ENCODE measurements at regions of chr22 and their contacts with region 1.

Region 1: GRCh38 chr22:24423519-24424000 is 3.8 kb upstream of the ADORA2A start:
- DNase-seq: peak; percentile 30
- H3K4me3 Mint-ChIP-seq: no peak overlapping the region
- H3K27ac Mint-ChIP-seq: no peak overlapping the region
- H3K4me1 Mint-ChIP-seq: peaks cover 6% of the 10 kb centered on the region
- H3K27me3 Mint-ChIP-seq: peaks cover 18% of the 10 kb centered on the region
- CTCF ChIP-seq: peak; percentile 91

Region 2: DNA sequence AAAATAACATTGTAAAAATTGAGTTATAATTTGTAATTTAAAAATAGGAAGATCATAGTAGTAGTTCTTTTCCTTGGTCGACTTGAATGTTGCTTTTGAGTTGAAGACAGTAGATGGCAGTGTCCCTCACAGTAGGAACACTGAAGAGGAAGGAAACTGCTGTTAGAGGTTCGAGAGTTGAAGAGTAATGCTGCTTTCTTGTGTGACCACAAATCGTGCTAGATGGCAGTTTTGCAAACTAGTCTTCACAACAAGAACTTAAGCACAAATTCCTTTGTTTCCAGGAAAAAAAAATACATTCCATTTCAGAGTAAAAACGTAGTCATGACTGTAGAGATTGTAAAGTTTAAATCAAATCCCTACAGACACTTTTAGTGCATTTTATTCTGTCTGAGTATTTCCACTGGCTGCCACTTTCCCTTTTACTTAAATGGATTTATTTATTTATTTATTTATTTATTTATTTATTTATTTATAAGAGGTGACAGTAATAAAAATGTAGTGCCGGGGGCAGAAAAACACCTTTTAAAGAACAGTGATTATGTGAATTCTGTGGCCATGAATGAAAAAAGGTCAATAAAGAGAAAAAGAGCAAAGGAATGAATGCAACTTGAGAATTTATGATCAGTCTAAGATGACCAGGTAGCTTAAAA is 98.3 kb before region 1 on chr22:
- CTCF ChIA-PET with region 1: interaction called, 6 read pairs
- POLR2A ChIA-PET with region 1: no interaction called
- intact Hi-C with region 1: loop called (anchors 5 kb)
- DNase-seq: peak; percentile 61
- H3K4me3 Mint-ChIP-seq: no peak overlapping the region
- H3K27ac Mint-ChIP-seq: no peak overlapping the region
- H3K4me1 Mint-ChIP-seq: peaks cover 11% of the 10 kb centered on the region
- H3K27me3 Mint-ChIP-seq: no peaks in the 10 kb centered on the region
- CTCF ChIP-seq: peak; percentile 49

Region 3: GRCh38 chr22:24433813-24434470 is 10.4 kb after region 1 on chr22:
- CTCF ChIA-PET with region 1: interaction called, 10 read pairs
- POLR2A ChIA-PET with region 1: interaction called, 4 read pairs
- intact Hi-C with region 1: no loop called
- DNase-seq: peak; percentile 30
- H3K4me3 Mint-ChIP-seq: no peak overlapping the region
- H3K27ac Mint-ChIP-seq: no peak overlapping the region
- H3K4me1 Mint-ChIP-seq: peaks cover 15% of the 10 kb centered on the region
- H3K27me3 Mint-ChIP-seq: no peaks in the 10 kb centered on the region
- CTCF ChIP-seq: no peak

Region 4: DNA sequence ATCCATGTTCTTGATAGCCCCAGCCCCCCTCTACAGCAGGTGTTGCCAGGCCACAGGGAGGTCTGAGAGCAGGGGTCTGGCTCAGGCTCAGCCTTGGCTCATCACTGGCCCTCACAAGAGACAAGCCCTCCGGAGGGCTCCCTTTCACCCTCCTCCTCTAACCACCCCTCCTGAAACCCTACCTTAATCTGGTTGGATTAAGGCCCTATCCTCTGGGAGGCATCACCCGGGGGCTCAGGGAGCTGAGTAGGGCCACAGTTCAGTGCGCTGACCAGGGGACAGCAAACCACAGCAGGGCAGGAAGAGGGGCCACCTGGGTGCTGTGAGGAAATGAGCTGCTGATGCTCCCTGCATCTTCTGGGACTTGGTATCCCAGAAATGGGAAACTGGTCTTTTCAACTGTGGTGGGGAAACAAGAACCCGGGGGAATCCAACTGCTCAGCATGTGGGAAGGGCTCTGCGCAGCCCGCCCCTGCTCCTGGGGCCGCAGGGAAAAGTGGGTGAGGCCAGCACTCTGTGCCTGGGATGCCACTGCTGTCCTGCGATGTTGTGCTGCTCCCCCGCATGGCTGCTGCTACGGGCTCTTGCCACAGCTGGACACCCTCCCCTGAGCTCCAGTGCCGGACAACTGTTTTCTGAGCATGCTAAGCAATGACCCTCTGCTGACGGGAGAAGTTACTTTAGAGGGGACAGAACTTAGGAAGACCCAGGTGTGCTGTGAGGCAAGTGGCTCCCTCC is 21.3 kb after region 1 on chr22:
- CTCF ChIA-PET with region 1: no interaction called
- POLR2A ChIA-PET with region 1: no interaction called
- intact Hi-C with region 1: no loop called
- DNase-seq: no peak
- H3K4me3 Mint-ChIP-seq: no peak overlapping the region
- H3K27ac Mint-ChIP-seq: no peak overlapping the region
- H3K4me1 Mint-ChIP-seq: no peaks in the 10 kb centered on the region
- H3K27me3 Mint-ChIP-seq: no peaks in the 10 kb centered on the region
- CTCF ChIP-seq: no peak

Region 5: DNA sequence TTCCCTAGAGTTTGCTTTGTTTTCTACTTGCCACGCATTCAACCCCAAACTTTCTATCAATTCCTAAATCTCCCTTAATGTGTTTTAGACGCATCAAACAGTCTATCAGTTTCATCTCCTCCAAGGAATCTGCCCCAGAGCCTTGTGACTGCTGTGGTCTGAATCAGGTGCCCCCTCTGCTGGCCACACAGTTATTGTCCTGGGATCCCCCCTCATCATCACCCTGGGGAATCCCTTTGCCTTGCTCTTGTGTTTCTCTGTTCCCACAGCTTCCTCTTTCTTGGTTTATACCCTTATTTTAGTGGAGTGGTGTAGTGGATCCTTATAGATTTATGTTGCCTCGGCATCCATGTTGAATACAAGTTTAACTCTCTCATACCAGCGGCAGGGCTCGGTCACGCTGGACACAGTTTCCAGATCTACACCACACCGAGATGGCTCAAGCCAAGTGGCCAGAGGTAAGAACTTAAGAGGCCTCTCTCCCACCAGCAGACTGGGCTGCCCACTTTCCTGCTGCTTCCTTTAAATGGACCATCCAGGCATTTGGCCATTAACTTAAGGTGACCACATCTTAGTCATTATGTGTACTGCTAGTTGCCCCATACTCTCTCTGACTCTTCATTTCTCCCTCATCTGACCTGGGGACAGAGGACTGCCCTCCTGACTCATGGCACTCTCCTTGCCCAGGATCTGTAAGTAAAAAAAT is 79.7 kb after region 1 on chr22:
- CTCF ChIA-PET with region 1: interaction called, 6 read pairs
- POLR2A ChIA-PET with region 1: no interaction called
- intact Hi-C with region 1: loop called (anchors 1 kb)
- DNase-seq: peak; percentile 67
- H3K4me3 Mint-ChIP-seq: no peak overlapping the region
- H3K27ac Mint-ChIP-seq: no peak overlapping the region
- H3K4me1 Mint-ChIP-seq: peaks cover 8% of the 10 kb centered on the region
- H3K27me3 Mint-ChIP-seq: no peaks in the 10 kb centered on the region
- CTCF ChIP-seq: peak; percentile 50

Measured in MCF 10A (cell line).